PC-9 (cell line): ENCODE measurements at regions of chr3 and their contacts with region 1.

Region 1: GRCh38 chr3:47324278-47324865 is 41.6 kb downstream of the KLHL18 start:
- DNase-seq: peak; percentile 61 to 72
- H3K4me3 ChIP-seq: no peak overlapping the region
- H3K27ac ChIP-seq: no peak overlapping the region
- H3K4me1 ChIP-seq: peaks cover 16% of the 10 kb centered on the region
- H3K27me3 ChIP-seq: no peaks in the 10 kb centered on the region
- CTCF ChIP-seq: peak; percentile 76

Region 2: GRCh38 chr3:46705022-46705530 is 619.3 kb before region 1 on chr3:
- CTCF ChIA-PET with region 1: no interaction called
- POLR2A ChIA-PET with region 1: no interaction called
- intact Hi-C with region 1: loop called (anchors 1 kb)
- DNase-seq: peak; percentile 60 to 78
- H3K4me3 ChIP-seq: no peak overlapping the region
- H3K27ac ChIP-seq: no peak overlapping the region
- H3K4me1 ChIP-seq: peaks cover 18% of the 10 kb centered on the region
- H3K27me3 ChIP-seq: no peaks in the 10 kb centered on the region
- CTCF ChIP-seq: peak; percentile 90

Region 3: GRCh38 chr3:46923559-46924350 is 400.6 kb before region 1 on chr3:
- CTCF ChIA-PET with region 1: no interaction called
- POLR2A ChIA-PET with region 1: no interaction called
- intact Hi-C with region 1: loop called (anchors 10 kb)
- DNase-seq: no peak
- H3K4me3 ChIP-seq: no peak overlapping the region
- H3K27ac ChIP-seq: no peak overlapping the region
- H3K4me1 ChIP-seq: peaks cover 4% of the 10 kb centered on the region; the same call in 1 of the 2 replicates
- H3K27me3 ChIP-seq: no peaks in the 10 kb centered on the region
- CTCF ChIP-seq: peak; percentile 72

Region 4: DNA sequence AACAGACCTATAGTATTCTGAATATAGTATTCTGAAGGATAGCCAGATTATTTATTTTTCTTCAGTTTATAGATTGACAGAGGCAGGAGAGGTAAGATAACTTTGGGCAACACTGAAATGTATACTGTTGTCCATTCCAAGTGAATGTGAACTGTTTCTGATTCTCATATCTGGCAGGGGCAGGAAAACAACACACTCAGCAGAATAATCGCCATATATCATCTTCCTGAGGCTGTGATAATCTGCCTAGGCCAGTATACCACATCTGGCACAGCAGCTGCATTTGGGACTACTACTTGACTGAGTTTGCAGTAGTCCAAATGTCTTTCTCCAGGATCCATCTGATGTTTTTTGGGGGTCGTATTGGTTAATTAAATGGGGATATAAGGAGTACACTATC is 138.1 kb before region 1 on chr3:
- CTCF ChIA-PET with region 1: no interaction called
- POLR2A ChIA-PET with region 1: no interaction called
- intact Hi-C with region 1: no loop called
- DNase-seq: no peak
- H3K4me3 ChIP-seq: no peak overlapping the region
- H3K27ac ChIP-seq: no peak overlapping the region
- H3K4me1 ChIP-seq: no peaks in the 10 kb centered on the region
- H3K27me3 ChIP-seq: no peaks in the 10 kb centered on the region
- CTCF ChIP-seq: no peak

Region 5: DNA sequence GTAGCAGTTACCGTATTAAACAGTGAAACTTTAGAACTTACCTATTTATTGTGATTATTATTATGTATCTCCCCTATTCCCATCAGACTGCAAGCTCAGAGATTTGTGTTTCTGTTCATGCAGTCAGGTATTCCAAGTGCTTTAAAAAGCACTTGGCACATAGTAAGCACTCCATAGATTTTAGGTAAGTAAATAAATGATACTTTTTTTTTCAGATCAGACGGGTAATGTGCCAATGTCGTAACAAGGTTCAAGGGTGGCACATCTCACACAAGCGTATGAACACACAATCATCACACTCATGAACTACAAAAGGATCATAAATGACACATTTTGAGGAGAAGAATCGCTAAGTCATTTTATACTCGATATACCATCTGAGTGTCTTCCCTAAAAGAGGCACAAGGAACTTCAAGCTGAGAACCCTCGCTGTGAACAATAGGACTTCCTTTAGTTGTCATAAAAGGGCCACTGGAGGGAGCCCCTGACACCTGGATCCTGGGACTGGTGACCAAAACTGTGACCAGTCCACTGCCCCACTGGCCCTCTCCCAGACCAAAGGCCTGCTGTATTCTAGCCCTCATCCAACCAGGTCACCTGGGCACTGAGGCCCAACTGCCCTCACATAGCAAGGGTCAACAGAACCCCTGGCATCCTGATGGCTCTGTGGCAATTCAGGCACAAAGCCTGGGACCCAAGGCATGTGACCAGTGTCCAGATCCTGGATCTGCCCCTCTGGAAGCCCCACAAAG is 73.9 kb before region 1 on chr3:
- CTCF ChIA-PET with region 1: interaction called, 5 read pairs
- POLR2A ChIA-PET with region 1: no interaction called
- intact Hi-C with region 1: loop called (anchors 1 kb)
- DNase-seq: peak in 1 of 2 experiments; percentile 41
- H3K4me3 ChIP-seq: no peak overlapping the region
- H3K27ac ChIP-seq: no peak overlapping the region
- H3K4me1 ChIP-seq: no peaks in the 10 kb centered on the region
- H3K27me3 ChIP-seq: no peaks in the 10 kb centered on the region
- CTCF ChIP-seq: peak; percentile 56

Region 6: DNA sequence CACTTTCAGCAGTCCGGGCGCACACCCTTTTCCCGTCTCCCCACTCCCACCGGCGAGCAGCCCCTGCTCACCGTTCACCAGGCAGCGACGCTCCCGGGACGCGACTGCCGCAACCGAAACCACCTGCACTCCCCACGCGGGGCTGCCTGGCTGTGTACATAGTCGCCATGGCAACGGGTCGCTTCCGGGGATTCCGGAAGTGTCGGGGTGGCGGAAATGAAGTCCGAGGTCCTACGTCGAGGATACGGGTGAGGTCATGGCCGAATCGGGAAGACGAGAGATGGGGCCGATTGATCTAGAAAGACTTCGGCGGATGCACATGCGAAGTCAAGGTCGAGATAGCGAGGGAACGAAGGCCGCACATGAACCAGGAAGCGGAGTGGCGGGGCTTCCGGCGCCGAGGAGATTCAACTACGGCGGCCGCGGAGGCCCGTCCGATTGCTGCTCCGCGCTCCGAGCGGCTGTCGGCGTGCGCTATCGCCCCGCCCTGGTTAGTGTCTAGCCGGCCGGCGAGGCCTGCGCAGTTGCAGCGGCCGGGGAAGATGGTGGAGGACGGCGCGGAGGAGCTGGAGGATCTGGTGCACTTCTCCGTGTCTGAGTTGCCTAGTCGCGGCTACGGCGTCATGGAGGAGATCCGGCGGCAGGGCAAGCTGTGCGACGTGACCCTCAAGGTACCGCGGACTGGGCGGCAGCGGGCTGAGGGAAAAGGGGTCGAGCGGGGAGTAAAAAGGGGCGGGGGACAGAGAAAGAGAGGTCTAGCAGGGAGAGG is 41.8 kb before region 1 on chr3 and contains the starts of genes KIF9 and KLHL18:
- CTCF ChIA-PET with region 1: no interaction called
- POLR2A ChIA-PET with region 1: interaction called, 3 read pairs
- intact Hi-C with region 1: loop called (anchors 5 kb)
- DNase-seq: peak; percentile 83 to 90
- H3K4me3 ChIP-seq: peak within 1 kb of the TSS; percentile 86
- H3K27ac ChIP-seq: peak within 1 kb of the TSS; percentile 87
- H3K4me1 ChIP-seq: peaks cover 7% of the 10 kb centered on the region
- H3K27me3 ChIP-seq: no peaks in the 10 kb centered on the region
- CTCF ChIP-seq: no peak
- total RNA-seq, gene KIF9: 18.4 and 21.4 TPM in 2 replicates
- total RNA-seq, gene KLHL18: 16.0 and 21.9 TPM in 2 replicates